ENCODE measurements at regions of chr2 and their contacts with region 1.

Region 1: GRCh38 chr2:63049970-63050333 is 678 bp upstream of the OTX1 start:
- ATAC-seq: peak in 2 of 8 experiments; percentile 32 to 56
- H3K4me3 ChIP-seq: peak overlapping the region; percentile 21 to 42 (median 33)
- H3K27ac ChIP-seq: no peak overlapping the region
- H3K4me1 ChIP-seq: peaks cover 8 to 16% of the 10 kb centered on the region in 2 donors

Region 2: DNA sequence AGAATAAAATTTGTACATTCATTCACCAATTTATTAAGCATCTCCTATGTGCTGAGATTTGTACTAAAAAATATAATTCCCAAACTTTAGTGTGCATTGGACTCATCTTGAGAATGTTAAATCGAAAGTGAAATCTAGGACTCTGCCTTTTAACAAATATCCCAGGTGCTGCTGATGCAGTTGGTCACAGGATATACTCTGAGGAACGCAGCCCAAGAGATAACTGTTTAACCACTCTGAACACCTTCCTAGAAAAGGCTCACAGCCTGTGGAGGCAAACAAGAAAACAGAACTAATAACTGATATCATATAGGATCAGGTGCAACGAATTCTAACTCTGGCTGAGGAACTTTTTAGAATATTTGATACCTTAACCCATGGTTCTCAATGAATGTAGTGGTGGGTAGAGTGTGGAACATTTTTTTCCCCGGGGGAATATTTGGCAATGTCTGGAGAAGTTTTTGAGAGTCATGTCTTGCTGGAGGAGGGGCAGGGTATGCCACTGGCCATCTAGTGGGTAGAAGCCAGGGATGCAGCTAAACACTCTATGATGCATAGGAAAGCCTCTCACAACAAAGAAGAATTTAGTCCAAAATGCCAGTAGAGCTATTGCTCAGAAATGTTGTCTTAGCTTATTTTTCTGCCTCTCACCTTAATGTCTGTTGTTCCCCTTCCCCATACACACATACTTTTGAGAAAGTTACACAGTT is 248.0 kb before region 1 on chr2:
- in situ Hi-C with region 1: loop called in 1 of 9 experiments (anchors 25 kb)
- ATAC-seq: no peak
- H3K4me3 ChIP-seq: no peak overlapping the region
- H3K27ac ChIP-seq: no peak overlapping the region
- H3K4me1 ChIP-seq: no peaks in the 10 kb centered on the region

Measured in motor neuron (in vitro differentiated cells).